ENCODE measurements at regions of chr3 and their contacts with region 1.

Region 1: GRCh38 chr3:11379824-11380701 is 107.9 kb downstream of the ATG7 start:
- DNase-seq: no peak
- H3K4me3 ChIP-seq: no peak overlapping the region
- H3K27ac ChIP-seq: no peak overlapping the region
- H3K4me1 ChIP-seq: no peaks in the 10 kb centered on the region
- H3K27me3 ChIP-seq: no peaks in the 10 kb centered on the region

Region 2: GRCh38 chr3:11651900-11652299 is 271.8 kb after region 1 on chr3:
- in situ Hi-C with region 1: loop called (anchors 5 kb)
- DNase-seq: peak; percentile 60
- H3K4me3 ChIP-seq: no peak overlapping the region
- H3K27ac ChIP-seq: no peak overlapping the region
- H3K4me1 ChIP-seq: no peaks in the 10 kb centered on the region
- H3K27me3 ChIP-seq: no peaks in the 10 kb centered on the region